ENCODE measurements at regions of chr15 and their contacts with region 1.

Region 1: GRCh38 chr15:58227706-58228543 is 89.7 kb downstream of the AQP9 start:
- DNase-seq: peak; percentile 48
- H3K4me3 Mint-ChIP-seq: no peak overlapping the region
- H3K27ac Mint-ChIP-seq: no peak overlapping the region
- H3K4me1 Mint-ChIP-seq: peaks cover 19% of the 10 kb centered on the region
- H3K27me3 Mint-ChIP-seq: peaks cover 20% of the 10 kb centered on the region

Region 2: DNA sequence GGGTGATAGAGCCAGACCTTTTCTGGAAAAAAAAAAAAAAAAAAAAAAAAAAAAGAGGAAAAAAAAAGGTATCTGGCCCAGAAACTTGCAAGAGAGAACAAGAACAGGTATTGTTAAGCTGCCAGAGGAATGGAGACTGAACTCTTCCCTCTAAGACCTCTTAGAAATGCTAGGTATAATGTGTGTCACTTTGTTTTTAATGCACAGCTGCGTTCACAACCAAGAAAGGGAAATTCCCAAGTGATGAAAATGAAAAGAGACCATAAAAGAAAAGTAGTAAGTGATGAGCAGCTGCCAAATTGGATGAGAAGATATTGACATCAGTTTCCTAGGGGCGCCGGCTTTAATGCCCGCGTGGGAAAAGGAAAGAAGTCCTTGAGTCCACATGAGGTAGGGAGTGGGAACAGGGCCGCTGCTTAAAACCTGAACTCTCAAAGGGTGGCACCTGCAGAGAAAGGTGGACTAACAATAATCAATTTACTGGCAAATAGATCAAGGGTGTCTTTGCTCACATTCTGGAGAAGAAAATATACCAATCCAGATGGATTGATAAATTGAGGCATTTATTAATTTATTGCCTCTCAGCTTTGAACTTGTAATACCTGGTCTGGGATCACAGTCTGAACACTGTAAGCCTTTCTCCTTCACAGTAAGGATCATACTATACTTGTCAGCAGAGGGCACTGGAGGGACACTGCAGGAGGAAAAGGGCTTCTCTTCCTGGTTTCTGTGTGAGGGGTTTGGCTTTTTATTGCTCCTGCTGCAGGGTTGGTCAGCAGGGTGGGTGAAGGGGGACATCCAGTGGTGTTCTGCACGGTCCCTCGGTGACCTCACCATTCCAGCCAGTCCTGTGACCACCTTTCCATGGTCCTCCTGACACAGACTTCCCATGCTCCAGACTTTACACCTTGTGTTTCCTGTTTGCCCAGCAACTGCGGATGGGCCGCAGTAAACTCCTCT is 41.8 kb after region 1 on chr15:
- intact Hi-C with region 1: loop called (anchors 1 kb)
- DNase-seq: peak; percentile 28
- H3K4me3 Mint-ChIP-seq: peak overlapping the region; percentile 6
- H3K27ac Mint-ChIP-seq: peak overlapping the region; percentile 6
- H3K4me1 Mint-ChIP-seq: peaks cover 16% of the 10 kb centered on the region
- H3K27me3 Mint-ChIP-seq: peaks cover 5% of the 10 kb centered on the region

Region 3: GRCh38 chr15:58758138-58758537 is 530.2 kb after region 1 on chr15:
- intact Hi-C with region 1: loop called (anchors 1 kb)
- DNase-seq: no peak
- H3K4me3 Mint-ChIP-seq: no peak overlapping the region
- H3K27ac Mint-ChIP-seq: no peak overlapping the region
- H3K4me1 Mint-ChIP-seq: peaks cover 5% of the 10 kb centered on the region
- H3K27me3 Mint-ChIP-seq: peaks cover 6% of the 10 kb centered on the region

Region 4: DNA sequence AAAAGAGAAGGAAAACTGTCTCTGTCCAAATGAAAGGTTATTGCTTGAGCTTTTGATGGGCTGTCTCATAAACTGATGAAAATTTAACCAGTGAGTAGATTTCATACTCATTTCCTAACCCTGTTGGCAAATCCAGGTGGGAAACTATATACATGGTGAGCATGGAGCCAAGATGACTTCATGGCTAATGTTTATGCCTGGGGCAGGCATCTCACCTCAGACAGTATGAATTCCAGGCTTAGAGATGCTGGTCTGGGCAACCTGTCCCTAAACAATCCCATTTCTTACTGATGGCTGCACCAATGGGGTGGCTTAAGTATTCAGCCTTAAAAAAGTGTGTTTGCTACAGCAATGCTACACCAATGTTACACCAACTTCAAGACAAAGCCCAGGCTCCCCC is 647.4 kb after region 1 on chr15:
- intact Hi-C with region 1: loop called (anchors 5 kb)
- DNase-seq: no peak
- H3K4me3 Mint-ChIP-seq: no peak overlapping the region
- H3K27ac Mint-ChIP-seq: no peak overlapping the region
- H3K4me1 Mint-ChIP-seq: no peaks in the 10 kb centered on the region
- H3K27me3 Mint-ChIP-seq: no peaks in the 10 kb centered on the region

Region 5: DNA sequence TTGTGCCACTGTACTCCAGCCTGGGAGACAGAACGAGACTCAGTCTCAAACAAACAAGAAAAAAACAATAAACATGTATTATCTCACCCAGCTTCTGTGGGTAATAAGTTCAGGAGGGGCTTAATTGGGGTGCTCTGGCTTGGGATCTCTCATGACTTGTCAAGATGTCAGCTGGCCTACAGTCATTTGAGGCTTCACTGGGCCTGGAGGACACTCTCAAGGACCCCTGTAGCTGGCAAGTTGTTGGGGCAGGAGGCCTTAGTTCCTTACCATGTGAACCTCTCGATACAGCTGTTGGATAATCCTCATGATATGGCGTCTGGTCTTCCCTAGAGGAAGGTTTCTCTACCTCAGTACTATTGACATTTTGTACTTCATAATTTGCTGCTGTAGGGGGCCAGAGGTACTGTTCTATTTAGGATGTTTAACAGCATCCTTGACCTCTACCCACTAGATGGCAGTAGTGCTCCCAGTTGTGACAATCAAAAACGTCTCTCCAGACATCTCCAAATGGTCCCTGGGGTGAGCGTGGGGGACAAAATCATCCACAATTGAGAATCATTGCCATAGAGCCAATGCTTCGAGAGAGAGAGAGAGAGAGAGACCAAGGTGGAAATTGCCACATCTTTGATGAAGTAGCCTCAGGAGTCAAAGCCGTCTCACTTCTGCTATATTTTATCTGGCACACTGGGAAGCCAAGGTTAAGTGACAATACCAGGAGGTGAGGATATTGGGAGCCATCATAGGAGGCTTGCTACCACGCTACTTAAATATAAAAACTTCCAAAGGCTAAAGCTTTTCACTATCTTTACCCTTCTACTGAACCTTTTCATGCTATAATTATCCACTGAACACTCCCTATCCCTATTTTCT is 729.4 kb after region 1 on chr15:
- intact Hi-C with region 1: loop called (anchors 10 kb)
- DNase-seq: peak; percentile 45
- H3K4me3 Mint-ChIP-seq: no peak overlapping the region
- H3K27ac Mint-ChIP-seq: no peak overlapping the region
- H3K4me1 Mint-ChIP-seq: peaks cover 17% of the 10 kb centered on the region
- H3K27me3 Mint-ChIP-seq: peaks cover 11% of the 10 kb centered on the region

Region 6: DNA sequence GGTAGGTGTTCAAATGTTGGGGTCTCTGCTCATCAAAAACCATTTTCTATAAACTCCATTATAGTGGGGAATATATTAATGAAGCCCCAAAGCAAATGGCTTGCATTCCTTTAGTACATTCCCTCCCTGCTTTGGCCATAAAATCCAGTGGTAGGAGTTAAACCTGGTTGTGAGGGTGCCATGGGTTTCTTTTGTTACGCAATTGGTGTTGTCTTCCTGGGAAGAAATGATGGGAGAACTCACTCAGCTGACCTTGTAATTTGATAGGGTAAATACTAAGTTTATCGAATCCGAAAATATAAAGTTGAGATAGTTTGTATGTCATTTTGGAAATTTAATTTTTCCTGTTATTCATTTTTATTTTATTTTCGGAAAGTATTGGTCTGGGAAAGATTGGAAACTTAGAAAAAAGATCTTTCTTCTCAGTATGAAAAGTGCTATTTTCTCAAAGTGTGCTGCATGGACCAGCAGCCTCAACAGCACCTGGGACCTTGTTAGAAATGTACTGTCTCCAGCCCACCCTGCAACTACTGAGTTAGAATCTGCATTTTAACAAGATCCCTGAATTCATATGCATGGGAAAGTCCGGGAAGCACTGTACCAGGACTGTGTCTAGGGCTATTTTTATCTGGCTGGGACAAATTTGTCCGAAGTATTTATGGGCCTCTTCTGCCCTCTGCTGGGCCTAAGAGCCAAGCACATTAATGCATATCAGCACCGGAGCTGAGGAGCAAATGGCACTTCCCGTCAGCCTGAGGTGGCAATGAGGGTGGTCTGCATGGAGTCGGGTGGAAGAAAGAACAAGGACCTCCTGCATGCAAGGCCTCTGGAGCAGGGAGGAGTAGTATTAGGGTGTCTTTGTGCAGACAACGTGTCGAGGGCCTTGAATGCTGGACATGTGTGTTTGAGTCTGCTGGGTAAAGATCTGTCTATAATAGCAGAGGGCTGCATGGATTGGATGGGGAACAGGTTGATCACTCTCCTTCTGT is 1264.8 kb after region 1 on chr15:
- intact Hi-C with region 1: loop called (anchors 10 kb)
- DNase-seq: peak; percentile 25
- H3K4me3 Mint-ChIP-seq: no peak overlapping the region
- H3K27ac Mint-ChIP-seq: no peak overlapping the region
- H3K4me1 Mint-ChIP-seq: no peaks in the 10 kb centered on the region
- H3K27me3 Mint-ChIP-seq: peaks cover 32% of the 10 kb centered on the region

Region 7: DNA sequence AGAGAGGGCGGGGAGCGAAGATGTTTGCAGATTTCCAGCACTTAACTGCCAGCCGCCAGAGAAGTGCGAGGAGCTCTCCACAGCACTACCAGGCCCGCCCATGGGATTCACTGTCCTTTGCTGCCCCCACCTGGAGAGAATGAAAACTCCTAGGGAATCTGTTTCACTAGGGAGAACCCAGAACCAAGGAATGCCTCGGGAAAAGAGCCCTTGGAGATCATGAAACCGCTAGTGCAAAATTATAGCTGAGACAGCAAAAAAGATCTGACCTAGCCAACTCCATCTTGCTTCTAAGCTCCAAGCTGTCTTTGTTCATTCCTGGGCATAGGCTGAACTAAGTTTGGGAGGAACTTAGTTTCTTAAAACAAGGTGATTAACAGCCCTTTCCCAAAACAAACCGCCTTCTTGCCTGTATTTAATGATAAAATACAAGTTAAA is 1301.1 kb after region 1 on chr15:
- intact Hi-C with region 1: loop called (anchors 1 kb)
- DNase-seq: peak; percentile 56
- H3K4me3 Mint-ChIP-seq: no peak overlapping the region
- H3K27ac Mint-ChIP-seq: no peak overlapping the region
- H3K4me1 Mint-ChIP-seq: peaks cover 21% of the 10 kb centered on the region
- H3K27me3 Mint-ChIP-seq: peaks cover 7% of the 10 kb centered on the region

Measured in activated T-helper 1 cell treated with anti-CD3 and anti-CD28 coated beads, Interleukin-12 subunit alpha, Interleukin-12 subunit beta, Interleukin-2, Interleukin-4 antibody, amounts not matched to agents 30 ng/mL and 10 ng/mL and 1 ng/mL, durations not matched to agents 14 hours and 24 hours and 36 hours (primary cell).